Activated CD4-positive, alpha-beta memory T cell treated with anti-CD3 and anti-CD28 coated beads, Interleukin-2, amount 10 ng/mL, durations not matched to agents 7 days and 5 days (primary cell): ENCODE measurements at regions of chr19 and their contacts with region 1.

Region 1: GRCh38 chr19:45770192-45771101 is 1.4 kb upstream of the SIX5 start:
- DNase-seq: peak; percentile 91
- H3K4me3 Mint-ChIP-seq: peak overlapping the region; percentile 79
- H3K27ac Mint-ChIP-seq: peak overlapping the region; percentile 68
- H3K4me1 Mint-ChIP-seq: peaks cover 18% of the 10 kb centered on the region
- H3K27me3 Mint-ChIP-seq: peaks cover 15% of the 10 kb centered on the region

Region 2: GRCh38 chr19:45692187-45693105 is 78.0 kb before region 1 on chr19 and contains the start of gene QPCTL:
- CTCF ChIA-PET with region 1: interaction called, 21 read pairs
- POLR2A ChIA-PET with region 1: interaction called, 8 read pairs
- DNase-seq: peak; percentile 98
- H3K4me3 Mint-ChIP-seq: peak within 1 kb of the TSS; percentile 90
- H3K27ac Mint-ChIP-seq: peak within 1 kb of the TSS; percentile 89
- H3K4me1 Mint-ChIP-seq: peaks cover 29% of the 10 kb centered on the region
- H3K27me3 Mint-ChIP-seq: no peaks in the 10 kb centered on the region
- total RNA-seq, gene QPCTL: 9.1 to 11.9 TPM

Region 3: GRCh38 chr19:45730389-45731288 is 39.8 kb before region 1 on chr19 and contains the start of gene FBXO46:
- CTCF ChIA-PET with region 1: interaction called, 24 read pairs
- POLR2A ChIA-PET with region 1: interaction called, 8 read pairs
- DNase-seq: peak; percentile 97
- H3K4me3 Mint-ChIP-seq: peak within 1 kb of the TSS; percentile 94
- H3K27ac Mint-ChIP-seq: peak within 1 kb of the TSS; percentile 79
- H3K4me1 Mint-ChIP-seq: peaks cover 34% of the 10 kb centered on the region
- H3K27me3 Mint-ChIP-seq: no peaks in the 10 kb centered on the region
- total RNA-seq, gene FBXO46: 34.4 to 36.4 TPM

Region 4: DNA sequence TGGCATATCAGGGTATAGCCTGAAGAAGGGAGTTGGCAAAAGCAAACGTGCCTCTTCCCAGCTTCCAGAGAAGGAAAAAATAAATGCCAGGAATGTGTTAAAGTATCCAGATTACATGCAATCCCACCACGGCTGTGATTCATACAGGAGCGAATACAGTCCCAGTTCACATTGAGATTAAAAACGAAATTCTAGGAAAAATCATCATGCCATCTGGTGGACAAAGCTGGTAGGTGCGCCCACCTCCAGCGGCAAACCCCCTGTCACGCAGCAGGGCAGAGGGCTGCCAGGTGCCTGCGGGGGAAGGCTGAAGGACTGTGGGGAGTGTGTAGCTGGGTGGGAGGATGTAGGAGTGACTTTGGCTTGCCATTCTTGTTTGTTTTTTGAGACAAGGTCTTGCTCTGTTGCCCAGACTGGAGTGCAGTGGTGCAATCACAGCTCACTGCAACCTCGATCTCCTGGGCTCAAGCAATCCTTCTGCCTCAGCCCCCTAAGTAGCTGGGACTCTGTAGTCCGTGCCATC is 28.6 kb after region 1 on chr19:
- CTCF ChIA-PET with region 1: interaction called, 212 read pairs
- POLR2A ChIA-PET with region 1: interaction called, 21 read pairs
- DNase-seq: peak; percentile 65
- H3K4me3 Mint-ChIP-seq: no peak overlapping the region
- H3K27ac Mint-ChIP-seq: no peak overlapping the region
- H3K4me1 Mint-ChIP-seq: peaks cover 8% of the 10 kb centered on the region
- H3K27me3 Mint-ChIP-seq: peaks cover 47% of the 10 kb centered on the region

Region 5: GRCh38 chr19:45817010-45817724 is 46.7 kb after region 1 on chr19:
- CTCF ChIA-PET with region 1: interaction called, 26 read pairs
- POLR2A ChIA-PET with region 1: interaction called, 3 read pairs
- DNase-seq: peak; percentile 96
- H3K4me3 Mint-ChIP-seq: no peak overlapping the region
- H3K27ac Mint-ChIP-seq: no peak overlapping the region
- H3K4me1 Mint-ChIP-seq: peaks cover 3% of the 10 kb centered on the region
- H3K27me3 Mint-ChIP-seq: no peaks in the 10 kb centered on the region

Region 6: GRCh38 chr19:45886427-45887199 is 116.2 kb after region 1 on chr19:
- CTCF ChIA-PET with region 1: interaction called, 12 read pairs
- POLR2A ChIA-PET with region 1: interaction called, 5 read pairs
- DNase-seq: peak; percentile 96
- H3K4me3 Mint-ChIP-seq: peak overlapping the region; percentile 84
- H3K27ac Mint-ChIP-seq: peak overlapping the region; percentile 91
- H3K4me1 Mint-ChIP-seq: peaks cover 29% of the 10 kb centered on the region
- H3K27me3 Mint-ChIP-seq: no peaks in the 10 kb centered on the region